Activated CD8-positive, alpha-beta memory T cell treated with anti-CD3 and anti-CD28 coated beads, Interleukin-2, amount 10 ng/mL, durations not matched to agents 7 days and 5 days (primary cell): ENCODE measurements at regions of chr14 and their contacts with region 1.

Region 1: DNA sequence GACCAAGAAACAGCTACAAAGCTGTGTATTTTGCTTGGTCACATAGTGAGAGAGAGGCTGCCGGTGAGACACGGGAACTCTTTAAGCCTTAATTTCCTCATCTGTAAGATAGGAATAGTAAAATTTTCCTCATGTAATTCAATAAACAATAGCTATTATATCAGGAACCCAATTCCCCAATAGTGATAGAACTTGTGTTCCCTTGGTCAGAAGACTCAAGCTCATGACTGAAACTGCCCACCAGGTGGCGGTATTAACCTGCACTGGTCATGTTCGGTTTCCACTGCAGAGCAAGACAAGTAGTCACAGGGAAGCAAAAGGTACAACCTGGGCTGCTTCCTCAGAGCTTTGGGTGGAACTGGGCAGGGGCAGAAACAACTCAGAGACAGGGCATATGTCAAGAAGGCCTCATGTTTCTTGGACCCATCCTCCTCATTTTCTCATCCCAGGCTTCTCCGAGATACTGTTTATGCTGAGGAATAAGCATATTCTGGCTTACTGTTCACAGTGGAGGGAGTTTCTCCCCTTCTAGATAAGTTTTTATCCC is 4.2 kb upstream of the AJUBA start:
- DNase-seq: peak; percentile 93
- ATAC-seq: peak; percentile 62
- H3K4me3 Mint-ChIP-seq: no peak overlapping the region
- H3K27ac Mint-ChIP-seq: no peak overlapping the region
- H3K4me1 Mint-ChIP-seq: no peaks in the 10 kb centered on the region
- H3K27me3 Mint-ChIP-seq: no peaks in the 10 kb centered on the region

Region 2: DNA sequence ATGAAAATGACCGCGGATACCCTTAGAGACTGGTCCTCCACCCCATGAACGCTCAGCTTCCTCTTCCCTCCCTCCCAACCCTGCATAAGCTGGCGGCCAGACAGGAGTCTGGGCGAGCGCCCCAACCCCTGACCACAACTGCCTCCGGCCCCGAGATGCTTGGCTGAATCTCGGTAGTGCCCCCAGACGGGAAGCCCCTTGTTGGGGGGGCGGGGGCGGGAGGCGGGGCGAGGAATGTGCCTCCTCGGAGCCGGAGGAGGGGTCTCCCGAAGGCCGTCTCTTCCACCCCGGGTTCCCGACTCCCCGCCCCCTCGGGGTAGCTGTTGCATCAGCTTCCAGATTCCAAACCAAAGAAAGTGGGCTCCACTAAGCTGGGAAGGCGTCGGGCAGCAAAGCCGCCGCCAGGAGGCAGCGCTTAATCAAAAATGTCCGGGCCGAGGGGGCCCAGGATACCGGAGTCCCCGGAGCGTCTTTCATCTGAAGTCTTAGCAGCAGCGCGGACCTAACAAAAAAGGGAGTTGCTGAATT is 163.9 kb before region 1 on chr14:
- CTCF ChIA-PET with region 1: interaction called, 13 read pairs
- DNase-seq: peak; percentile 81
- ATAC-seq: peak; percentile 94
- H3K4me3 Mint-ChIP-seq: peak overlapping the region; percentile 30
- H3K27ac Mint-ChIP-seq: no peak overlapping the region
- H3K4me1 Mint-ChIP-seq: peaks cover 29% of the 10 kb centered on the region
- H3K27me3 Mint-ChIP-seq: peaks cover 28% of the 10 kb centered on the region

Region 3: GRCh38 chr14:22955702-22956569 is 30.6 kb before region 1 on chr14:
- CTCF ChIA-PET with region 1: interaction called, 18 read pairs
- DNase-seq: no peak
- ATAC-seq: no peak
- H3K4me3 Mint-ChIP-seq: peak overlapping the region; percentile 94
- H3K27ac Mint-ChIP-seq: peak overlapping the region; percentile 88
- H3K4me1 Mint-ChIP-seq: peaks cover 34% of the 10 kb centered on the region
- H3K27me3 Mint-ChIP-seq: peaks cover 4% of the 10 kb centered on the region

Region 4: GRCh38 chr14:22973217-22974032 is 13.2 kb before region 1 on chr14:
- CTCF ChIA-PET with region 1: interaction called, 200 read pairs
- DNase-seq: peak; percentile 52
- ATAC-seq: peak; percentile 51
- H3K4me3 Mint-ChIP-seq: no peak overlapping the region
- H3K27ac Mint-ChIP-seq: no peak overlapping the region
- H3K4me1 Mint-ChIP-seq: no peaks in the 10 kb centered on the region
- H3K27me3 Mint-ChIP-seq: peaks cover 14% of the 10 kb centered on the region

Region 5: DNA sequence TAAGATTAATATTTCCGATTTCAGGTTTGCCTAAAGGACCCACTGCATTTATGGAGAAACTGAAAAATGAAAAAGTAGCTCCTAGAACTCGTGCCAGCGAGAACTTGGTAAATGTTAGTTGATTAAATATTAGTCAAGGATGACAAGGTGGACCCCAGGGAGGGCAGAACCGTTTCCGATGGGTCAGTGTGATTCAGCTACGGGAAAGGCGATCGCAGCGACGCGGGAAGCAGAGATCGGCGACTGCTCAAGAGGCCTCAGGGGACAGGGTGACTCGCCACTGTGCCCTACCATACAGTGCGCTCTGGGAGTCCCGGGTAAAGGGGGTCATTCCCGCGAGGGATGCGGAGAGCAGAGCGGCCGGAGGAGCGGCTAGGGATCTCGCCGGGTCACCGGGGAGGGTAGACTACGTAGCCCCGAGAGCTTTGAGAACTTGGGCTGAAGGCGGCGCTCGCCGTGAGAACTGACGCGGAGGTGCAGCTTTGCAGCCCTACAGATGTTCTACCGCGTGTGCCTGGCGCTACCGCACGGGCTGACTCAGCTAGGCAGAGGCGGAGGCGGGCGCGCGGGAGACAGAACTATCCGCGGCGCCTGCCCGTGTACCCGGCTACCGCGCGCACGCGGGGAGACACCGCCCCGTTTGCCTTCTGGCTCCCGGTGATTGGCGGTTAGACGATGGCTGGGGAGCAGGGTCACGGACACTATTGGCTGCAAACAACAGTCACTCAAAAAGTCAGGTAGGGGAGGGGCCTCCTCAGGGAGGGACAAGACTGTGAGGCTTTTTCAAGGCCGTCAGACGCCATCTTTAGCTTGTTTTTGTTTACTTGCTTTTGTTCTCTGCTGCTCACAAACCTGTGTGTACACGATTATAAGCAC is 20.2 kb after region 1 on chr14:
- CTCF ChIA-PET with region 1: interaction called, 45 read pairs
- DNase-seq: peak; percentile 98
- ATAC-seq: peak; percentile 97
- H3K4me3 Mint-ChIP-seq: peak overlapping the region; percentile 93
- H3K27ac Mint-ChIP-seq: peak overlapping the region; percentile 96
- H3K4me1 Mint-ChIP-seq: peaks cover 44% of the 10 kb centered on the region
- H3K27me3 Mint-ChIP-seq: no peaks in the 10 kb centered on the region

Region 6: GRCh38 chr14:23034483-23035302 is 48.1 kb after region 1 on chr14 and contains the start of gene PSMB5:
- CTCF ChIA-PET with region 1: interaction called, 14 read pairs
- DNase-seq: peak; percentile 95
- ATAC-seq: peak; percentile 95
- H3K4me3 Mint-ChIP-seq: peak within 1 kb of the TSS; percentile 83
- H3K27ac Mint-ChIP-seq: peak within 1 kb of the TSS; percentile 95
- H3K4me1 Mint-ChIP-seq: peaks cover 27% of the 10 kb centered on the region
- H3K27me3 Mint-ChIP-seq: peaks cover 3% of the 10 kb centered on the region
- total RNA-seq, gene PSMB5: 66.7 to 95.3 TPM

Region 7: GRCh38 chr14:23068476-23069412 is 82.2 kb after region 1 on chr14:
- CTCF ChIA-PET with region 1: interaction called, 867 read pairs
- DNase-seq: peak; percentile 85
- ATAC-seq: peak; percentile 75
- H3K4me3 Mint-ChIP-seq: peak overlapping the region; percentile 48
- H3K27ac Mint-ChIP-seq: peak overlapping the region; percentile 50
- H3K4me1 Mint-ChIP-seq: peaks cover 34% of the 10 kb centered on the region
- H3K27me3 Mint-ChIP-seq: no peaks in the 10 kb centered on the region